Activated naive CD4-positive, alpha-beta T cell treated with anti-CD3 and anti-CD28 coated beads for 36 hours (primary cell): ENCODE measurements at regions of chr3 and their contacts with region 1.

Region 1: DNA sequence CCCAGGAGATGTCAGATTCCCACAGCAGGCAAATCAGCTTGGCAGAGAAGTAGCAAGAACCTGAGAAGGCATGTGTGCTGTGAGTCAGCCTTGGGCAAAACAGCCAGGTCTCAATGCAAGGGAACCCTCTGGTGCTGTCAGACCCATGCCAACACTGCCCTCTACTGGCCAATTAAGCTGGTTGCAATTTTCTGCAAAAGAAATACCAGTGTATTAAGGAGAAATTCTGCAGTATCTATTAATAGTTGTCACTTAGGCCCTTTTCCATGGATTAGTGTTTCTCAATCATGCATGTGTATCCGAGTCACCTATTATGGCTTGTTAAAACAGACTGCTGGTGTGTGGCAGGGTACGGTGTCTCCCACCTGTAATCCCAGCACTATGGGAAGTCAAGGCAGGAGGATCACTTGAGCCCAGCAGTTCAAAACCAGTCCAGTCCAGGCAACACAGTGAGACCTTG is 26.2 kb downstream of the MAP4 start:
- DNase-seq: peak; percentile 86
- H3K4me3 Mint-ChIP-seq: no peak overlapping the region
- H3K27ac Mint-ChIP-seq: no peak overlapping the region
- H3K4me1 Mint-ChIP-seq: peaks cover 4% of the 10 kb centered on the region
- H3K27me3 Mint-ChIP-seq: no peaks in the 10 kb centered on the region

Region 2: DNA sequence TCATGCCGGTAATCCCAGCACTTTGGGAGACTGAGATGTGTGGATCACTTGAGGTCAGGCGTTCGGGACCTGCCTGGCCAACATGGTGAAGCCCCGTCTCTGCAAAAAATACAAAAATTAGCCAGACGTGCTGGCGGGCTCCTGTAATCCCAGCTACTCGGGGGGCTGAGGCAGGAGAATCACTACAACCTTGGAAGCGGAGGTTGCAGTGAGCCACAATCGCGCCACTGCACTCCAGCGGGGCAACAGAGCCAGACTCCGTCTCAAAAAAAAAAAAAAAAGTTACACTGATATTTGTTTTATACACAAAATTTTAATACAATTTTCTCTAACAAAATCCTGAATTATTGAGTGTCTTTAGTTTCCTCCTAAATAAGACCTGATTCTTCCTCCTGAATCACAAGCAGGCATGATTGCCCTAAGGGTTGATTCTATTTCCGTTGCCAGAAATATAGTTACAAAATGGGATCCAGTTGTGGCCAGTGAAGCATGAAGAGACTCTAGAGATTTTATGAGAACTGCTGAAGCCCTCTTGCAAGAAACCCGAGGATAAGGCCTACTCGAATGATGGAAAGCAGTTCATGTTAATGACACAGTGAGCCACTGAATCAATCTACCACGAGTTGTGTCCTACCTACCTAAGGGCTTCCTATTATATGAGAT is 198.7 kb before region 1 on chr3:
- CTCF ChIA-PET with region 1: no interaction called
- intact Hi-C with region 1: loop called (anchors 1 kb)
- DNase-seq: no peak
- H3K4me3 Mint-ChIP-seq: no peak overlapping the region
- H3K27ac Mint-ChIP-seq: no peak overlapping the region
- H3K4me1 Mint-ChIP-seq: no peaks in the 10 kb centered on the region
- H3K27me3 Mint-ChIP-seq: no peaks in the 10 kb centered on the region

Region 3: DNA sequence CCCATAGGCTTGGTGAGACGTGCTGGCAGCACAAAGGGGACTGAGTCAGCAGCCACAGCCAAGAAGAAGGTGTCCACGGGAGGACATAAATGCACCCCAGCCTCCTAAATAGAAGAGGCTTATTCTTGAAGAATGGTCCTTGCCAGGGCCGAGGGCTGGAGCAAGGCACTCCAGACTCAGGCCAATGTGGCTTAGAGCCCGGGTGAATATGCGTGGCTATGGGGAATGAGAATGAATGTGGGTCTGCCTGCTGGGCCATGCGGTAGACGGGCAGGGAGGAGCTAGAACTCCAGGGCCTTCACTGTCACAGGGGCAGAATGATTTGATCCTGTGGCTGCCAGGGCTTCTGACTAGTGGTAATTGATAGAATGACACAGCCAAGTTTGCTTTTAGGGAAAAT is 153.0 kb before region 1 on chr3:
- CTCF ChIA-PET with region 1: interaction called, 18 read pairs
- intact Hi-C with region 1: loop called (anchors 1 kb)
- DNase-seq: no peak
- H3K4me3 Mint-ChIP-seq: no peak overlapping the region
- H3K27ac Mint-ChIP-seq: no peak overlapping the region
- H3K4me1 Mint-ChIP-seq: peaks cover 2% of the 10 kb centered on the region
- H3K27me3 Mint-ChIP-seq: no peaks in the 10 kb centered on the region

Region 4: GRCh38 chr3:48151058-48151806 is 161.2 kb after region 1 on chr3:
- CTCF ChIA-PET with region 1: interaction called, 9 read pairs
- intact Hi-C with region 1: loop called (anchors 1 kb)
- DNase-seq: peak; percentile 75
- H3K4me3 Mint-ChIP-seq: no peak overlapping the region
- H3K27ac Mint-ChIP-seq: no peak overlapping the region
- H3K4me1 Mint-ChIP-seq: no peaks in the 10 kb centered on the region
- H3K27me3 Mint-ChIP-seq: no peaks in the 10 kb centered on the region